ENCODE measurements at regions of chr6 and their contacts with region 1.

Region 1: DNA sequence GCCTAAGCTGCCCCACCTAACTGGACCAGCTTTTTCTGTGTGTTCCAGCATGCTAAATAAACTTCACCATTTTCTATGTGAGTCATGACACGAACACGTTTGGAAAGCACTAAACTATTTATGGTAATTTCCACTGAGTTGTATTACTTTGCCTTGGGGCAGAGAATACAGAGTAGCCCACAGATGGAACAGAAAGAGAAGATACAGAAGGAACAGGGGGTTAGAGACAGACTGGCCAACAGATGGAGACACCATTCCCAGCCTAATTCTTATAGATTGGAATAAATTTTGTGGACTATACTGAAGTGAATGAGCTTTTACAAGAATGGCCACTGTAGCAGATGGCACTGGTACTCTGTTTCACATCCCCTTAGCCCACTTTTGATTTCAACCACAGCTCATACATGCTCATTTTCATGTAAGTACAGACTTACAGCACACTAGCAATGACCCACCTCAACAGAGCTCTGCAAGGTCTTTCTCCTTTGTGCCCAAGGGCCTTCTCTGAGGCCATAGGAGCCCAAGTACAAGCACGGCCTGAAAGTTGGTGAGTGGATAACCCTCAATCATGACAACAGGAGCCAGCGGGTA is 13.1 kb upstream of the NT5DC1 start:
- DNase-seq: no peak
- H3K4me3 ChIP-seq: no peak overlapping the region
- H3K27ac ChIP-seq: peak overlapping the region; percentile 69 to 81
- H3K4me1 ChIP-seq: peaks cover 0 to 10% of the 10 kb centered on the region in 2 donors
- H3K27me3 ChIP-seq: no peaks in the 10 kb centered on the region
- CTCF ChIP-seq: no peak

Region 2: DNA sequence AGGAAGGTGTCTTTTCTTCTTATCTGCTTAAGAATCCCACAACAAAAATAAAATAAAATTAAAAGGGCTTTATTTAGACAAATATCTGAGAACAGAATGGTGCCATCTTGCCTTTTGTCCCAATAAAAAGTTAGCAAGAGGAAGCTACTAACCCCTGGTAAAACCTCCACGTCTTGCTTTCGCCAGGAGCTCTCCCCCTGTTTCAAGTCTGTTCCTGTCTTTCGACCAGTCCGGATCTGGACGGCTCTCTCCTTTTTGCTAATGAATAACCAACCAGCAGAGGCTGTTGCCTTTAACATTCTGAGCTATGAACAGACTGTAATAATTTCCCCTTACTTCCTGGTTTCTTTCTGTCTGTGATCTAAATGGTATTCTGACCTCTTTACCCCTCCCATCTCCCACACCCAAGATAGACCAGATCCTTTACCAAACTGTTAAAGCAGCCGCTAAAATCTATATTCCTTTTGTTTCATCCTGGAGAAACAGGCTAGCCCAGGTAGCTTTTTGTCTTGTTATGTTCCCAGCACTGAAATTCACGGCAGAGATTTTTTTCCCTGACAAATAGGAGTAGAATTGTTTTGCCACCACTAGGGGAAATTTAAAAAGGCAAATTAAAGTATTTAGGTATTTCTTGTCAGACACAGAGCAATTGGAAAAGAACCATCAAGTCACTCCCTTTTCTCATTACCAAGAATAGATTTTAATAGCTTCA is 26.8 kb before region 1 on chr6 and contains the start of gene FRK:
- intact Hi-C with region 1: loop called (anchors 2 kb)
- DNase-seq: peak in 1 of 2 donors; percentile 82
- H3K4me3 ChIP-seq: peak within 1 kb of the TSS; percentile 50 to 85
- H3K27ac ChIP-seq: peak within 1 kb of the TSS; percentile 84 to 85
- H3K4me1 ChIP-seq: peaks cover 0 to 9% of the 10 kb centered on the region in 2 donors
- H3K27me3 ChIP-seq: no peaks in the 10 kb centered on the region
- CTCF ChIP-seq: peak in 2 of 3 experiments; percentile 32 to 50
- total RNA-seq, gene FRK: 8.4 TPM